ENCODE measurements at regions of chr19 and their contacts with region 1.

Region 1: GRCh38 chr19:49640113-49640898 is at the start of gene RRAS:
- DNase-seq: peak; percentile 100
- ATAC-seq: peak; percentile 76
- H3K4me3 Mint-ChIP-seq: peak within 1 kb of the TSS; percentile 100
- H3K27ac Mint-ChIP-seq: peak within 1 kb of the TSS; percentile 100
- H3K4me1 Mint-ChIP-seq: peaks cover 48% of the 10 kb centered on the region
- H3K27me3 Mint-ChIP-seq: no peaks in the 10 kb centered on the region
- total RNA-seq, gene RRAS: 9.7 to 11.7 TPM

Region 2: GRCh38 chr19:48812094-48812929 is 828.0 kb before region 1 on chr19:
- CTCF ChIA-PET with region 1: no interaction called
- POLR2A ChIA-PET with region 1: no interaction called
- intact Hi-C with region 1: loop called in 1 of 2 experiments (anchors 5 kb)
- DNase-seq: peak; percentile 78
- ATAC-seq: peak; percentile 40
- H3K4me3 Mint-ChIP-seq: peak overlapping the region; percentile 85
- H3K27ac Mint-ChIP-seq: peak overlapping the region; percentile 37
- H3K4me1 Mint-ChIP-seq: peaks cover 29% of the 10 kb centered on the region
- H3K27me3 Mint-ChIP-seq: no peaks in the 10 kb centered on the region

Region 3: DNA sequence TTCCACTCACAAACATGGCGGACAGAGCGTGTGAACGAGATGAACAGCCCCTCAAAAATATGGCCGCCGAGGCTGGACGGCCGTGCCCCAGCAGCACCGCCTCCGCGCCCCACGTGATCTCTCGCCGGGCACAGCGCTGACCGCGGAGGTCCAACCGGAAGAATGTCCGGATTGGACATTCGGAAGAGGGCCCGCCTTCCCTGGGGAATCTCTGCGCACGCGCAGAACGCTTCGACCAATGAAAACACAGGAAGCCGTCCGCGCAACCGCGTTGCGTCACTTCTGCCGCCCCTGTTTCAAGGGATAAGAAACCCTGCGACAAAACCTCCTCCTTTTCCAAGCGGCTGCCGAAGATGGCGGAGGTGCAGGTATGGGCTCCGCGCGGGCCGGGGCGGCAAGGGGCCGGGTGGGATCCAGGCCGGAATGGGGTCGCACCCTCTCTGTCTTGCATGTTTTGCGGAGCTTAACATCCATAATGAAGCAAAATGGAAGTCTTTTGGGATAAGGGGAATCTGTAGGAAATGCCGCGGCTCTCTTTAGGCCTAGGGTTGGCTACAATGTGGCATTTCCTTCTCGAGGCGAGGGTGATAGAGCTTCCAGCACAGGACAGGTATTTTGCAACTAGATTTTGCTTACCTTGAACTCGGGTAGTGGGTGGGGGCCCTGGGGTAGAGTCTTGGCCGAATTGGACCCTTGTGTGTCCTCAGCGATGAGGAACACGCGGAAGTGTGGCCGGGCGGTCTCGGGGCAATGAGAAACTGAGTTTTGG is 152.8 kb before region 1 on chr19 and contains the start of gene RPL13A:
- CTCF ChIA-PET with region 1: no interaction called
- POLR2A ChIA-PET with region 1: no interaction called
- intact Hi-C with region 1: loop called in 1 of 2 experiments (anchors 2 kb)
- DNase-seq: peak; percentile 100
- ATAC-seq: peak; percentile 90
- H3K4me3 Mint-ChIP-seq: peak within 1 kb of the TSS; percentile 99
- H3K27ac Mint-ChIP-seq: peak within 1 kb of the TSS; percentile 97
- H3K4me1 Mint-ChIP-seq: peaks cover 26% of the 10 kb centered on the region
- H3K27me3 Mint-ChIP-seq: no peaks in the 10 kb centered on the region
- total RNA-seq, gene RPL13A: 3,861 to 3,967 TPM

Region 4: DNA sequence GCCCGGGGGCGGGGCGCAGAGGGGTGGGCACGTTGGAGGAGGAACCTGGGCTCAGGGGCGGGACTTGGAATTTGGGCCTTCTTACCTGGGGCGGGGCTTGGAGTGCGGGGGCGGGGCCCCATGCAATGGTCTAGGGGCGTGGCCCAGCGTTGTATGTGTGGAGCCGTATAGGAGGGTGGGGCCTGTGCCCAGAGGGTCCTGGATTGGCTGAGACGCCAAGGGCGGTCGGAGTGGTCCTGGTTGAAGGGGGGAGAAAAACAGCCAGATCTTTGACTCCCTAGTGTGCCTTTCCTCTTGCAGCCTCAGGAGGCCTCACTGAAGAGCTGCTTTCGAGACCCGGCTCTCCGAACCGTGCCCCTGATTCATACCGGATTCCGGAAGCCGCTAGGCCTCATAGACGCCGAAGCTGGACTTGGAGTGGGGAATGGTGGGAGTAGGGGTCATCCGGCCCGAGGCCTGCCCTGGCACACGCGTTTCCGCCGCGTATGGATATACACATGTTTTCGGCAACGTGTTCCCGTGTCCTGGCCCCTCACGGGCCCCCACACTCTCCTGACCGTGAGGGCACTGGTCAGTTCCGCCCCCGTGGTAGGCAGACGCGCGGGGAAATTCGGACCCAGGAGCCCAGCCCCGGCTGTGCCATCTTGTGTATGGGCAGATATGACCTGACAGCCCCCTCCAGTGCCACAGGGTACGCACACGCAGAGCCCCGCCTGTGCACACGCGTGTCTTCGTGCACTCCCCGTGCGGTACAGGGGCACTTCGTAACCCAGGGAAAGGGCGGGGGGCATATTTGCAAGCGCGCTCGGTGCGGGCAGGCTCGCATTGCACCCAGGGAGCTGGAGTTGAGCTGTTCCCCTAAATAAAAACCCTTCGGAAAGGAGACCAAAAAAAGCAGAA is 50.0 kb before region 1 on chr19:
- CTCF ChIA-PET with region 1: interaction called, 6 read pairs
- POLR2A ChIA-PET with region 1: interaction called, 4 read pairs
- intact Hi-C with region 1: loop called (anchors 1 kb)
- DNase-seq: peak; percentile 98
- ATAC-seq: peak; percentile 80
- H3K4me3 Mint-ChIP-seq: peak overlapping the region; percentile 79
- H3K27ac Mint-ChIP-seq: peak overlapping the region; percentile 84
- H3K4me1 Mint-ChIP-seq: peaks cover 28% of the 10 kb centered on the region
- H3K27me3 Mint-ChIP-seq: no peaks in the 10 kb centered on the region

Region 5: GRCh38 chr19:49690656-49691242 is 50.4 kb after region 1 on chr19 and contains the start of gene CPT1C:
- CTCF ChIA-PET with region 1: no interaction called
- POLR2A ChIA-PET with region 1: no interaction called
- intact Hi-C with region 1: no loop called
- DNase-seq: peak; percentile 77
- ATAC-seq: peak; percentile 72
- H3K4me3 Mint-ChIP-seq: peak within 1 kb of the TSS; percentile 62
- H3K27ac Mint-ChIP-seq: peak within 1 kb of the TSS; percentile 51
- H3K4me1 Mint-ChIP-seq: peaks cover 23% of the 10 kb centered on the region
- H3K27me3 Mint-ChIP-seq: peaks cover 16% of the 10 kb centered on the region
- total RNA-seq, gene CPT1C: 1.1 to 1.6 TPM

Region 6: DNA sequence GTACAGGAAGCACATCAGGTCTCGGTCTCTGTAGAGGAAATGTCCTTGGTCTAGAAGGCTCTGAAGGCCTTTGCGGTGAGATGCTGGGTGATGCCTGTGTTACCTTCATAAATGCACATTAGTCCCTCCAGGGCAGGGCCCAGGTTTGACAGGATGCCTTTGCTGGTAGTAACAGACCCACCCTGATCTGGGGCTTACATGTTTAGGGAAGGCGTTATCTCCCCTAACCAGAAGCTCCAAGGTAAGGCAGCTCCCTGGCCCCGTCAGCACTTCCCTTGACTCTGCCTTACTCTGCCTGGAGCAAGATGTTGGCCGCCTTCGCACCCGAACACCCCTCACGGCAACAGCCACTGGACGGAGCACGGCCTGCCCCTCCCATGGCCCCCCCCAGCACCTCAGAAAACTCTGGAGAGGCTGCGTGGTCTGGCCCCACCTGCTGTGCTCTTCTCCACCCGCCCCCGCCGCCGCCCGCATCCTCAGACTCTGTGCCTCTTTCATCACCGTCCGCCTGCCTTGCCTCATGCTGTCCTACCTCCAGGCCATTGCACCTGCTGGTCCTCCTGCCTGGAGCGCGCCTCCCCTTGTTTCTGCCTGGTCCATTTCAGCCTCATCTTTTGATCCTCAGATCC is 135.6 kb after region 1 on chr19:
- CTCF ChIA-PET with region 1: no interaction called
- POLR2A ChIA-PET with region 1: no interaction called
- intact Hi-C with region 1: no loop called
- DNase-seq: no peak
- ATAC-seq: no peak
- H3K4me3 Mint-ChIP-seq: no peak overlapping the region
- H3K27ac Mint-ChIP-seq: no peak overlapping the region
- H3K4me1 Mint-ChIP-seq: peaks cover 3% of the 10 kb centered on the region
- H3K27me3 Mint-ChIP-seq: no peaks in the 10 kb centered on the region

Region 7: GRCh38 chr19:49817964-49818648 is 177.8 kb after region 1 on chr19 and contains the start of gene MED25:
- CTCF ChIA-PET with region 1: no interaction called
- POLR2A ChIA-PET with region 1: interaction called, 3 read pairs
- intact Hi-C with region 1: loop called in 1 of 2 experiments (anchors 1 kb)
- DNase-seq: peak; percentile 91
- ATAC-seq: peak; percentile 75
- H3K4me3 Mint-ChIP-seq: peak within 1 kb of the TSS; percentile 87
- H3K27ac Mint-ChIP-seq: peak within 1 kb of the TSS; percentile 99
- H3K4me1 Mint-ChIP-seq: peaks cover 26% of the 10 kb centered on the region
- H3K27me3 Mint-ChIP-seq: no peaks in the 10 kb centered on the region
- total RNA-seq, gene MED25: 39.6 to 49.9 TPM

Region 8: DNA sequence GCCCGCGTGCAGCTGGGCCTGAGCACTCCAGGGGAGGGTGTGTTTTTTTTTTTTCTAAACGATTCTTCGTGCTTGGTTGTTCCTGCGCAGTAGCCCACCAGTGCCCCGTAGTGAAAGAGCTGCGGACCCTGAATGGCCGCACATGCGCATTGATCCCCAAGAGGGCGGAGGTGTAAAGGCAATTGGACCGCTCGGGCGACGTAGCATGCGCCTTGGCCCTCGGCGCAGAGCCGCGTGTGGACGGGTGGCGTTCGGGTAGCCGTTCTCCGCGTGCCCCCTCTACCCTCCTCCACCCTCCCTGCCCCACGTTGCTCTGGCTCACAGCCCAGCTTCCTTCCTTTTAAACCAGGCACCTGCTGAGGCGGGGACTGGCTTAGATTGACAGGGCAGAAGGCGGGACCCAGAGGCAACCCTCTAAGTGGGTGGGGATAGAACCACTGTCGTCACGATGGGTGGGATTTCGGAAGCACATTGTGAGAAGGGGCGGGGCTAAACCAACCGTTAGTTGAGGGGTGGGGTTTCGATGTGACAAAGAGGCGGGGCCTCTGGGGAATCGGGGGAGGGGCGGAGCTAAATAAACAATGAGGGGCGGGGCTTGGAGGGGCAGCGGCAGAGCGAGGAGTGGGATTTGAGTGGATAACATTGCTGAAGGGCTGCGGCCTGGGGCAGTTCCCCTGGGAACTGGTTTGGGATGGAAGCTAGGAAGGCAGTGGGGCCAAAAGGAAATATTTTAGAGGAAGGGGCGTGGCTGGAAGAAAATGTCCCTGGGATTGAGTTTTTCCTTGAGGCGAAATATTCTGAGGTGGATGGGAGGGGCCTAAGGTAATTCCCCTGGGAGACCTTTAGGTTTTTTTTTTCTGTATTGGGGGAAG is 289.5 kb after region 1 on chr19:
- CTCF ChIA-PET with region 1: no interaction called
- POLR2A ChIA-PET with region 1: no interaction called
- intact Hi-C with region 1: loop called in 1 of 2 experiments (anchors 1 kb)
- DNase-seq: peak; percentile 97
- ATAC-seq: peak; percentile 91
- H3K4me3 Mint-ChIP-seq: peak overlapping the region; percentile 96
- H3K27ac Mint-ChIP-seq: peak overlapping the region; percentile 98
- H3K4me1 Mint-ChIP-seq: peaks cover 59% of the 10 kb centered on the region
- H3K27me3 Mint-ChIP-seq: no peaks in the 10 kb centered on the region

Region 9: GRCh38 chr19:50511068-50511822 is 870.9 kb after region 1 on chr19 and contains the start of gene JOSD2:
- CTCF ChIA-PET with region 1: no interaction called
- POLR2A ChIA-PET with region 1: no interaction called
- intact Hi-C with region 1: loop called in 1 of 2 experiments (anchors 5 kb)
- DNase-seq: peak; percentile 99
- ATAC-seq: peak; percentile 97
- H3K4me3 Mint-ChIP-seq: peak within 1 kb of the TSS; percentile 84
- H3K27ac Mint-ChIP-seq: peak within 1 kb of the TSS; percentile 92
- H3K4me1 Mint-ChIP-seq: peaks cover 14% of the 10 kb centered on the region
- H3K27me3 Mint-ChIP-seq: peaks cover 5% of the 10 kb centered on the region
- total RNA-seq, gene JOSD2: 17.4 to 28.1 TPM